PC-9 (cell line): ENCODE measurements at regions of chr1 and their contacts with region 1.

Region 1: GRCh38 chr1:244214009-244214967 is 163.2 kb downstream of the ZBTB18 start:
- DNase-seq: peak; percentile 81 to 99
- H3K4me3 ChIP-seq: peak overlapping the region; percentile 31; the same call in 1 of the 2 replicates
- H3K27ac ChIP-seq: peak overlapping the region; percentile 93
- H3K4me1 ChIP-seq: peaks cover 30% of the 10 kb centered on the region
- H3K27me3 ChIP-seq: no peaks in the 10 kb centered on the region
- CTCF ChIP-seq: no peak

Region 2: GRCh38 chr1:244112636-244113035 is 101.7 kb before region 1 on chr1:
- CTCF ChIA-PET with region 1: no interaction called
- POLR2A ChIA-PET with region 1: no interaction called
- intact Hi-C with region 1: loop called (anchors 10 kb)
- DNase-seq: peak in 1 of 2 experiments; percentile 68
- H3K4me3 ChIP-seq: no peak overlapping the region
- H3K27ac ChIP-seq: peak overlapping the region; percentile 8; the same call in 1 of the 2 replicates
- H3K4me1 ChIP-seq: peaks cover 20% of the 10 kb centered on the region
- H3K27me3 ChIP-seq: no peaks in the 10 kb centered on the region
- CTCF ChIP-seq: no peak

Region 3: DNA sequence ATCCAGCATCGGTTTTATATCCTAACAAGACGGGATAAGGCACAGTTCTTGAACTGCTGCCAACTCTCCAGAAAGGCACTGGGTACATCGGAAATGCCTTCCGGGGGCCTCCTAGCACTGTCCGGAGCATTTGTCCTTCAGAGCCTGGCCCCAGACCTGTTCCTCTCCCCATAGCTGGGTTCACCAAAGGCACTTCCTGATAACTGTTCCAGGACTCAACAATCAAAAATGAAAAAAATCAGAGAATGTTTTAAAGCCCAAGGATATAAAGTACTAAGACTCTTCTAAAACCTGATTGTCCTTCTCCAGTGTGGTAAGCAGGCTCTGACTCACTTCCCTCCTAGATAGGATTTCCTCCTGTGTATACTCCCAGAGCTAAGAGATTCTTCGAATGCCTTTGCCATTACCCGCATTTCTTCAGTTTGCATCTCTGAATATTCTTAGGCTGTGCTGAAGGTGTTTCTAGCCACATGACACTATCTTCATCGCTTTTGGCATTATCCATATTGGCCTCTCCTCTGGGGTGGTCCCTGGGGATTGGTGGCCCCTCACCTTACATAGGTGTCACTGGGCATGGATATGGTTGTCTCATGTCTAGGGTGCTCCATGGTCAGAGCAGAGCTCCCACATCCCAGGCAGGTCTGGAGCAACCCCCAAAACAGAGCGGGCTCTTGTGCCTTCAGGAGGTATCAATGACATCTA is 50.3 kb before region 1 on chr1:
- CTCF ChIA-PET with region 1: no interaction called
- POLR2A ChIA-PET with region 1: no interaction called
- intact Hi-C with region 1: loop called (anchors 1 kb)
- DNase-seq: peak; percentile 76 to 100
- H3K4me3 ChIP-seq: peak overlapping the region; percentile 15; the same call in 1 of the 2 replicates
- H3K27ac ChIP-seq: peak overlapping the region; percentile 83
- H3K4me1 ChIP-seq: peaks cover 54% of the 10 kb centered on the region
- H3K27me3 ChIP-seq: no peaks in the 10 kb centered on the region
- CTCF ChIP-seq: no peak

Region 4: GRCh38 chr1:244231572-244232315 is 17.5 kb after region 1 on chr1:
- CTCF ChIA-PET with region 1: no interaction called
- POLR2A ChIA-PET with region 1: no interaction called
- intact Hi-C with region 1: loop called (anchors 1 kb)
- DNase-seq: peak; percentile 41 to 73
- H3K4me3 ChIP-seq: peak overlapping the region; percentile 48; the same call in 1 of the 2 replicates
- H3K27ac ChIP-seq: peak overlapping the region; percentile 68
- H3K4me1 ChIP-seq: peaks cover 44% of the 10 kb centered on the region
- H3K27me3 ChIP-seq: no peaks in the 10 kb centered on the region
- CTCF ChIP-seq: no peak

Region 5: DNA sequence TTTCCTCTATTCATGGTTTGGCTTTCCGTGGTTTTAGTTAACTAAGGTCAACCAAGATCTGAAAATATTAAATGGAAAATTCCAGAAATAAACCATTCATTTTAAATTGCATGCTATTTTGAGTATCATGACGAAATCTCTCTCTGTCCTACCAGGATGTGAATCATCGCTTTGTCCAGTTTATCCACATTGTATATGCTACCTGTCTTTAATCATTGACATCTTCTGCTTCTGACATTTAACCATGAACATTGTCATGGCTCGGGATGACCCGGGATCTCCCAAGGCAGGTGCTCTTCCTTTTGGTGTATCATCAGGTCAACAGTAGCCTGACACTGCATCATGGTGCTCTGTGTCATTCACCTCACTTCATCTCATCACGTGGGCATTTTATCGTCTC is 775.5 kb after region 1 on chr1:
- CTCF ChIA-PET with region 1: no interaction called
- POLR2A ChIA-PET with region 1: no interaction called
- intact Hi-C with region 1: no loop called
- DNase-seq: peak in 1 of 2 experiments; percentile 33
- H3K4me3 ChIP-seq: no peak overlapping the region
- H3K27ac ChIP-seq: no peak overlapping the region
- H3K4me1 ChIP-seq: peaks cover 10% of the 10 kb centered on the region
- H3K27me3 ChIP-seq: no peaks in the 10 kb centered on the region
- CTCF ChIP-seq: no peak